ENCODE measurements at regions of chr19 and their contacts with region 1.

Region 1: DNA sequence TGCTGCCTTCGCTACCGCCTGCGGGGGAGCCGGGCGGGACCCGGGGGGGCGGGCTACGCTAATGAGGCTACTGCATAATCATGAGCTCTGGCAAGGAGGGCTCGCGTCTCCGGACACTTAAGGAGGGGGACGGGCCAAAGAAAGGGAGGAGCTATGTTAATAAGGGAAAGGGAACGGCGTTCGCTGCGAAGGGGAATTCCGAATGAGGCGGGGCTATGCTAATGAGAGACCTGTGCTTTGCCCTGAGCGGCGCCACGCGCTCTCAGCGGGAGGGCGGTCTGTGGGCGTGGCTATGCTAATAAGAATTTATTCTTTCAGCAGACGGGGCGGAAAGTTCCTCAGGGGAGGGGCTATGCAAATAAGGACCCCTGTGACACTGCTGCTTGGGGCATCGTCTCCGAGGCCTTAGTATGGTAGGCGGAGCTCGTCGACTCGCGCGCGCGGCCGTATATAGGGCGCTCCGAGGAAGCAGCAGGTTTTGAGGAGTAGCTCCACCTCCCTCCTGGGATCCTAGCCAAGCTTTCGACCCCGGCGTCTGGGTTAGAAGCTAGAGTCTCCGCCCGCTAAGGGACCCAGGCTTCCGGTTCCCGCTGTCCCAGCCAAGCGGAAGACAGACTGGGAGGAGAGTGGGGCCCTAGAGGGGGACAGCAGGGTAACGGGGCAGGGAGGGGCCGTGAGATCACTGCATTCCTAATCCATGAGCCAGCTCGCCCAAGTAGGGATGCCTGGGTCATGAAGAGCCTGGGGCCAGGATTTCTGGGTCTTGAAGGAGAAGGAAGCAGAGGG is at the start of gene RRAS:
- H3K4me3 ChIP-seq: peak within 1 kb of the TSS; percentile 51
- H3K27ac ChIP-seq: peak within 1 kb of the TSS; percentile 98
- H3K4me1 ChIP-seq: peaks cover 31% of the 10 kb centered on the region
- CTCF ChIP-seq: no peak

Region 2: DNA sequence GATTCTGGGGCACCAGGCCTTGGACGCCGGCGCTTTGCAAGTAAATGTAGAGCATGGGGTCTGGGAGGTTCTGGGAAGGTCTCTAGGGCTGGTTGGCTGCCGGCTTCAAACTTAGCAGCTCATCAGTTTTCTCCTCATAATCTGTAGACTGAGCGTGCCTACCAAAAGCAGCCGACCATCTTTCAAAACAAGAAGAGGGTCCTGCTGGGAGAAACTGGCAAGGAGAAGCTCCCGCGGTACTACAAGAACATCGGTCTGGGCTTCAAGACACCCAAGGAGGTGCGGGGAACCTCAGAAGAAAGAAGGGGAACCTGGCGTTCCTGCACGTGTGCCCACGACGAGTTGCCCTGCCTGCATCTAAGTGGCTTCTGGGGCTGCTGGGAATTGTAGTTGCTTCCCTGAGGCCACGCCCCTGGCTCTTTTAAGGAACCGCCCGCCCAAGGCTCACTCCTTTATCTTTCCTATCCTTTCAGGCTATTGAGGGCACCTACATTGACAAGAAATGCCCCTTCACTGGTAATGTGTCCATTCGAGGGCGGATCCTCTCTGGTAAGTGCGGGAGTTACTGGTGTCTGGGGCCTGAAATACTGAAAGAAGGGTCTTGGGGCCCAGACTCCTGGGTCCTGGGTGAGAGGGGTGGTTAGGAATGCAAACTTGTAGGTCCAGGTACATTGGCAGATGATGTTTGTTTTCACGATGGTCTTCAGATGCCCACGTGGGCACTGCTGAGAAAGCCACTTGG is 143.1 kb before region 1 on chr19:
- CTCF ChIA-PET with region 1: no interaction called
- POLR2A ChIA-PET with region 1: interaction called, 24 read pairs
- H3K4me3 ChIP-seq: peak overlapping the region; percentile 89
- H3K27ac ChIP-seq: peak overlapping the region; percentile 87
- H3K4me1 ChIP-seq: peaks cover 7% of the 10 kb centered on the region
- CTCF ChIP-seq: no peak

Region 3: DNA sequence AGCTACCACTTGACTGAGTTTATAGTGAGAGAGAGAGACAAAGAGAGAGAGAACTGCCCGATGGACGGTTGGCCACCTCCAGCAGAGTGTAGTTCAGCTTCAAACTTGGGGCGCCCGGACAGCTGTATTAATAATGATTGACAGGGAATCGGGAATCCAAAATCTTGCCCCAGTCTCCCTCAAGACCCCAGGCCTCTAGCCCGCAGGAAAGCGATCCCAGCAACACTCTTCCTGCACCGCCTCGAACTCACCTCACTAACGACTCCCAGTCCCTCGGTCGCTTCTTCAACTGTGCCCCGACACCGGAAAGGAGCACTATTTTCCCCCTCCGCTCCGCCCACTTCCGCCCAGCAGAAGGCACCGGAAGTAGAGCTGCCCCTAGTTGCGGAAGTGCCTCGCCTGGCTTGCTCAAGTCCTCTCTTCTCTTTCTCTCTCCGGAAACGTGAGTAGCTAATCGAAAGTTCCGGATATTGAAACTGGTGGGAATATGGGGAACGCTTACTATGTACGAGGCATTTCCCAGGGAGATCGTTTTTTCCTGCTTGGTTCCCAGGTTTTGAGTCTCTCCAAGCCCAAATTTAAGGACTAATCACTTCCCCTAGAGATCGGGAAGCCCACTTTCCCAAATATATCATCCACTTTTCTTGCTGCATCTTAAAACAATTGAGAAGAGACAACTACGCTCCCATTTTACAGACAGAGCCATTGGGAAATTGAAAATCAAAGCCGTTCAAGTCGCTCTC is 59.9 kb before region 1 on chr19 and contains the start of gene NOSIP:
- CTCF ChIA-PET with region 1: no interaction called
- POLR2A ChIA-PET with region 1: interaction called, 40 read pairs
- H3K4me3 ChIP-seq: peak within 1 kb of the TSS; percentile 67
- H3K27ac ChIP-seq: peak within 1 kb of the TSS; percentile 58
- H3K4me1 ChIP-seq: peaks cover 9% of the 10 kb centered on the region
- CTCF ChIP-seq: no peak

Region 4: GRCh38 chr19:49590071-49590970 is 50.0 kb before region 1 on chr19:
- CTCF ChIA-PET with region 1: interaction called, 7 read pairs
- POLR2A ChIA-PET with region 1: interaction called, 124 read pairs
- H3K4me3 ChIP-seq: peak overlapping the region; percentile 82
- H3K27ac ChIP-seq: peak overlapping the region; percentile 99
- H3K4me1 ChIP-seq: peaks cover 7% of the 10 kb centered on the region
- CTCF ChIP-seq: no peak; the same call in none of the 2 replicates

Region 5: DNA sequence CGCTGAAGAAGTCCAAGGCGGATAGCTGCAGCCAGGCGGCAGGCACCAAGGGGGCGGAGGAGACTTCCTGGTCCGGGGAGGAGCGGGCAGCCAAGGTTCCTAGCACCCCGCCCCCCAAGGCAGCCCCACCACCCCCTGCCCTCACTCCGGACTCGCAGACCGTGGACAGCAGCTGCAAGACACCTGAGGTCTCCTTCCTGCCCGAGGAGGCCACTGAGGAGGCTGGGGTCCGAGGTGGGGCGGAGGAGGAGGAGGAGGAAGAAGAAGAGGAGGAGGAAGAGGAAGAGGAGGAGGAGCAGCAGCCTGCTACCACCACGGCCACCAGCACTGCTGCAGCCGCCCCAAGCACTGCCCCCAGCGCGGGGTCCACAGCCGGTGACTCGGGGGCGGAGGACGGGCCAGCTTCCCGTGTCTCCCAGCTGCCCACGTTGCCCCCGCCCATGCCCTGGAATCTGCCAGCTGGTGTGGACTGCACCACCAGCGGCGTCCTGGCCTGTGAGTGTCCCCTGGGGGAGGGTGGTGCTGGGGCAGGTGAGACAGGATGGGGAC is 13.0 kb after region 1 on chr19:
- CTCF ChIA-PET with region 1: interaction called, 4 read pairs
- POLR2A ChIA-PET with region 1: interaction called, 23 read pairs
- H3K4me3 ChIP-seq: no peak overlapping the region
- H3K27ac ChIP-seq: no peak overlapping the region
- H3K4me1 ChIP-seq: no peaks in the 10 kb centered on the region
- CTCF ChIP-seq: no peak

Region 6: DNA sequence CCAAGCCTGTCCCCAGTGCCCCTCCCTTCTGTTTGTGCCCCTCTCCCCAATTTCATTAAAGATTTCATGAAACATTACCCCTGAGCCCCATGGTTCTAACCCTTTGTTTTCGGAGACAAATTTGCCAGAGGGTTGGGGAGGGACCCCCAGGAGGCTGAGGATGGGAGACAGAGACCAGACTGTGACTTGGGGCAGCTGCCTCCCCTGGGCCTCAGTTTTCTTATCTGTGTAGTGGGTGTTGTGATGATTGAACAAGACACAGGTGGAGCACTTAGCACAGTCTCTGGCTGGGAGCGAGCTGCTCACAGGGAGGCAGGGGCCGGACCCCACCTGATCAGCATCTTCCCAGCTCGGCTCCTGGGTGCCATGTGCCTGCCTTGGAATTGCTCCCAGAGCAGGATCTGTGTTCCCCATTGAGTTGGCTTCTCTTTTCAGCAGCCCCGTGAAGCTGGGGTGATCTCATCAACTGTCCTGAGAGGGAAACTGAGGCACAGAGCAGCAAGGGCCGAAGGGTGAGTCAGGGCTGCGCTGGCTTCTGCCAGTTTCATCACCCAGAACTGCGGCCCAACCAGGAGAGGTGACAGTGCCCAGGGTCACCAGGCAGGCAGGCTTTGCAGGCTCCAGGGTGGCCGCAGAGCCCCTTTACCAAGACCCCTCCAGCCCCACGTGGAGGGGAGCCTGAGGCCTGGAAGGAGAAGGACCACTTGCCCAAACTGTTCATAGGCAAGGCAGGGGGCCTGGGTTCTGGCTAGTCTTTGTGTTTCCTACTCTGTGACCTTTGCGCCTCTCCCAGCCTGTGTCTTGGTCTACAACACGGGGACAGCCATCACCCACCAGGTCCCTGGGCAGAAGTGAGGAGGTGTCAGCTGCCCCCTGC is 18.5 kb after region 1 on chr19:
- CTCF ChIA-PET with region 1: interaction called, 4 read pairs
- POLR2A ChIA-PET with region 1: interaction called, 85 read pairs
- H3K4me3 ChIP-seq: no peak overlapping the region
- H3K27ac ChIP-seq: no peak overlapping the region
- H3K4me1 ChIP-seq: no peaks in the 10 kb centered on the region
- CTCF ChIP-seq: no peak

Region 7: GRCh38 chr19:49665351-49666119 is 25.2 kb after region 1 on chr19 and contains the starts of genes BCL2L12 and IRF3:
- CTCF ChIA-PET with region 1: interaction called, 59 read pairs
- POLR2A ChIA-PET with region 1: interaction called, 85 read pairs
- H3K4me3 ChIP-seq: peak within 1 kb of the TSS; percentile 48
- H3K27ac ChIP-seq: peak within 1 kb of the TSS; percentile 87
- H3K4me1 ChIP-seq: peaks cover 6% of the 10 kb centered on the region
- CTCF ChIP-seq: peak; percentile 50; the same call in 1 of the 2 replicates

Region 8: GRCh38 chr19:49690656-49691242 is 50.4 kb after region 1 on chr19 and contains the start of gene CPT1C:
- CTCF ChIA-PET with region 1: no interaction called
- POLR2A ChIA-PET with region 1: no interaction called
- H3K4me3 ChIP-seq: no peak within 1 kb of the TSS
- H3K27ac ChIP-seq: no peak within 1 kb of the TSS; the same call in 1 of the 2 replicates
- H3K4me1 ChIP-seq: peaks cover 8% of the 10 kb centered on the region
- CTCF ChIP-seq: no peak

Region 9: GRCh38 chr19:49779731-49780589 is 139.7 kb after region 1 on chr19:
- CTCF ChIA-PET with region 1: no interaction called
- POLR2A ChIA-PET with region 1: no interaction called
- H3K4me3 ChIP-seq: no peak overlapping the region
- H3K27ac ChIP-seq: no peak overlapping the region
- H3K4me1 ChIP-seq: no peaks in the 10 kb centered on the region
- CTCF ChIP-seq: no peak